Activated CD4-positive, alpha-beta T cell treated with anti-CD3 and anti-CD28 coated beads for 36 hours (primary cell): ENCODE measurements at regions of chr13 and their contacts with region 1.

Region 1: GRCh38 chr13:19863323-19864023 is at the start of gene ZMYM5:
- DNase-seq: peak; percentile 98
- ATAC-seq: peak; percentile 90
- H3K4me3 Mint-ChIP-seq: peak within 1 kb of the TSS; percentile 94
- H3K27ac Mint-ChIP-seq: peak within 1 kb of the TSS; percentile 97
- H3K4me1 Mint-ChIP-seq: peaks cover 41% of the 10 kb centered on the region
- H3K27me3 Mint-ChIP-seq: no peaks in the 10 kb centered on the region
- total RNA-seq, gene ZMYM5: 9.1 to 10.1 TPM

Region 2: DNA sequence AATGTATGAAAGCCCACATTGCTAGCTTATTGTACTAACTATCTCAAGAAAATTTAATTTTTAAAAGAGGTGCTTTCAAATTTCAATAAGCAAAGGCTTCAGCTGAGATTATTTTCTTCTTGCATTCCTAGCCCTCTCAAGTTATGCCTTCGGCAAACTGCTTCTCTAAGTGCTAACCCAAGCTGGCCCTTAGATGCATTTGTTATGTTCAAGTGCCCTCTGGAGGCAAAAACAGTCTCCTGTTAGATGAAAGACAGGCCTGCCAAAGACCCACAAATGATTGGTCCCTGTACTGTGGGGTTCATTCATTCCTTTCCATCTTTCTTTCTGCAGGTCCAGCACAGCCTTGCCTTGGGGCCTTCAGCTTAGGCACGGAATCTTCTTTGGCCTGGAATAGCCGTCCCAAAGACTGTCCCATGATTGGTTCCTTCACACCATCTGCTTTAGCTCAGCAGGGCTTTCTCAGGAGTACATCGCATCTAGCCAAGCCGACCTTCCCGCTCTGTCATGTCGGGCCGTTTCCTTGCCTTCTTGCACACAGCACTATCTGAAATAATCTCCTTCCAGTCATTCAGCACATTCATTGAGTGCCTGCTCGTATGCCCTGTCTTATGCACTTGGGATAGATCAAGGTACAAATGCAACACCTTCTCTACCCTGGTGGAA is 275.7 kb before region 1 on chr13:
- CTCF ChIA-PET with region 1: no interaction called
- POLR2A ChIA-PET with region 1: no interaction called
- intact Hi-C with region 1: loop called in 1 of 2 experiments (anchors 1 kb)
- DNase-seq: peak; percentile 46
- ATAC-seq: peak; percentile 67
- H3K4me3 Mint-ChIP-seq: peak overlapping the region; percentile 78
- H3K27ac Mint-ChIP-seq: peak overlapping the region; percentile 93
- H3K4me1 Mint-ChIP-seq: peaks cover 14% of the 10 kb centered on the region
- H3K27me3 Mint-ChIP-seq: no peaks in the 10 kb centered on the region

Region 3: DNA sequence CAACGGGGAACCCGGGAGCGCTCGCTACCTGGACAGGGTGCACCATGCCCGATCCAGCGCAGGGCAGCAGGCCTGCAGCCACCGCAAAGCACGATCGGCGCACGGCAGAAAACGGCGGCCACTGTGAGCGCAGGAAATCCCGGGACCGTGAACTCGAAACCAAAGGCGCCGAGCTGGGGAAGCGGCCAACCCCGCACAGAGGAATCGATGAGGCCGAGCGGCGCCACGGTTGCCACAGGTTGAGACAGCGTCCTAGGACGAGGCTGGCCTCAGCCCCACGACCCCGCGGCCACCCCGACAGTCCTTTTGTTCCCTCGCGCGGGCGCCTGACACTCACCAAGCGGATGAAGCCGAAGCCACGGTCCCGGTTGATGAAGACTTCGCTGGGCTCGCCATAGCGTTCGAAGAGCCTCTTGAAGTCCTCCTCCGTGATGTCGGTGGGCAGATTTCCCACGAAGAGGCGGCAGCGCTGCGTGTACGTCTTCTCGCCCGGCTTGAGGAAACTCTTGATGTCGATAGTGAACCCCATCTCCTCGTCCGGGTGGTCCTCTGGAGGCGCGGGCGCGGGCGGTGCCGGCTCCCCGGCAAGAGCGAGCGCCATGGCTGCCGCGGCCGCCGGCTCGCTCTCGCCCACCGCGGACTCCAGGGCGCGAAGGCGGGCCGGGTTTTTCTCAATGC is 81.3 kb before region 1 on chr13:
- CTCF ChIA-PET with region 1: interaction called, 3 read pairs
- POLR2A ChIA-PET with region 1: interaction called, 5 read pairs
- intact Hi-C with region 1: loop called (anchors 1 kb)
- DNase-seq: peak; percentile 75
- ATAC-seq: peak; percentile 45
- H3K4me3 Mint-ChIP-seq: peak overlapping the region; percentile 94
- H3K27ac Mint-ChIP-seq: peak overlapping the region; percentile 98
- H3K4me1 Mint-ChIP-seq: peaks cover 5% of the 10 kb centered on the region
- H3K27me3 Mint-ChIP-seq: no peaks in the 10 kb centered on the region

Region 4: GRCh38 chr13:20160847-20161274 is 297.4 kb after region 1 on chr13 and contains the start of gene GJA3:
- CTCF ChIA-PET with region 1: no interaction called
- POLR2A ChIA-PET with region 1: no interaction called
- intact Hi-C with region 1: loop called in 1 of 2 experiments (anchors 1 kb)
- DNase-seq: peak; percentile 78
- ATAC-seq: peak; percentile 52
- H3K4me3 Mint-ChIP-seq: peak within 1 kb of the TSS; percentile 75
- H3K27ac Mint-ChIP-seq: no peak within 1 kb of the TSS
- H3K4me1 Mint-ChIP-seq: peaks cover 15% of the 10 kb centered on the region
- H3K27me3 Mint-ChIP-seq: peaks cover 39% of the 10 kb centered on the region
- total RNA-seq, gene GJA3: 0.26 to 0.32 TPM

Region 5: GRCh38 chr13:20231839-20232555 is 368.5 kb after region 1 on chr13 and contains the start of gene GJB6:
- CTCF ChIA-PET with region 1: no interaction called
- POLR2A ChIA-PET with region 1: no interaction called
- intact Hi-C with region 1: no loop called
- DNase-seq: peak; percentile 58
- ATAC-seq: peak; percentile 56
- H3K4me3 Mint-ChIP-seq: peak within 1 kb of the TSS; percentile 73
- H3K27ac Mint-ChIP-seq: peak within 1 kb of the TSS; percentile 65
- H3K4me1 Mint-ChIP-seq: peaks cover 11% of the 10 kb centered on the region
- H3K27me3 Mint-ChIP-seq: peaks cover 14% of the 10 kb centered on the region
- total RNA-seq, gene GJB6: 2.7 to 2.9 TPM

Region 6: GRCh38 chr13:20475927-20476691 is 612.6 kb after region 1 on chr13:
- CTCF ChIA-PET with region 1: no interaction called
- POLR2A ChIA-PET with region 1: no interaction called
- intact Hi-C with region 1: loop called in 1 of 2 experiments (anchors 10 kb)
- DNase-seq: peak; percentile 86
- ATAC-seq: peak; percentile 92
- H3K4me3 Mint-ChIP-seq: peak overlapping the region; percentile 67
- H3K27ac Mint-ChIP-seq: peak overlapping the region; percentile 92
- H3K4me1 Mint-ChIP-seq: peaks cover 40% of the 10 kb centered on the region
- H3K27me3 Mint-ChIP-seq: no peaks in the 10 kb centered on the region

Region 7: DNA sequence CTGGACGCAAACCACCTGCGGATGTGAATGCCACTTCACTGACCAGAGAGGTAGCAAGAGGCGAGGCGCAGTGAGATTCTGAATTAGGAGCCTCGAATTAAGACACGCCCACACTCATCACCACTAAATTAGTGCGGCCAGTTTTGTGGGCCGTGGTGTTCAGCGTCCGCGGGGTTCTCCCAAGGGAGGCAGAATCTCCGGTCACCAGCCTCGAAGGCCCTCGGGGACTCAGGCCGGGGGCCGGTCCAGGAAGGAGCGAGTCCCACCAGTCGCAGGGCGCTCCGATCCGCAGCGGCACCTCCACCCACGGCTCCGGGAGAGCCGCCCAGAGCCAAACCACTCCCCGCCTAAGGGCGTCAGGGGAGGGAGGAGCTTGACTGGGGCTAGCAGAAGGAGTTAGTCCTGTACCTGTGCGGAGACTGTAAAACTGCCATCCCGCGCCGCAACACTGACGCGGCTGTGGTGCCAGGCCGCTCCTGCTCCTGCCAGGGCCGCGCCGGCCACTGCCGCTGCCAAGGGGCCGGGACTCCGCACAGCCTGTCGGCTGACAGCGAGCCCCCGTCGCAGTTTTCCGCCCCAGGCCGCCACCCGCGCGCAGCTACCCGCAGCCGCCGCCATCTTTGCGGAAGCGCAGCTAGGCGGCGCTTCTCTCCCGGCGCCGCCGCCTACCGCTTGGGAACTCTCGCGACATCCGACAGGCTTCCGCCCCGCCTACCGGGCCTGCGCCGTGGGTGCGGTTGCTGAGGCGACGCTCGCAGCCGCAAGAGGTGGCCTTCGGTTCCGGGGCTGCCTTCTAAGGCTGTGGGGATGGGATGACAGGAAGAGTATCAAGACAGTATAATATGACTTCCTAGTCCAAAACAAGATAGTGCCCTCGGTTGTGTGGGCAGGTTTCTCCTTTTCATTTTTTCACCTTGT is 1740.3 kb after region 1 on chr13 and contains the start of gene MICU2:
- CTCF ChIA-PET with region 1: no interaction called
- POLR2A ChIA-PET with region 1: no interaction called
- intact Hi-C with region 1: loop called in 1 of 2 experiments (anchors 5 kb)
- DNase-seq: peak; percentile 97
- ATAC-seq: peak; percentile 96
- H3K4me3 Mint-ChIP-seq: peak within 1 kb of the TSS; percentile 85
- H3K27ac Mint-ChIP-seq: peak within 1 kb of the TSS; percentile 94
- H3K4me1 Mint-ChIP-seq: peaks cover 35% of the 10 kb centered on the region
- H3K27me3 Mint-ChIP-seq: peaks cover 1% of the 10 kb centered on the region
- total RNA-seq, gene MICU2: 28.4 to 28.7 TPM